Uterus (tissue), 4 donors: ENCODE measurements at regions of chr19 and their contacts with region 1.

Region 1: DNA sequence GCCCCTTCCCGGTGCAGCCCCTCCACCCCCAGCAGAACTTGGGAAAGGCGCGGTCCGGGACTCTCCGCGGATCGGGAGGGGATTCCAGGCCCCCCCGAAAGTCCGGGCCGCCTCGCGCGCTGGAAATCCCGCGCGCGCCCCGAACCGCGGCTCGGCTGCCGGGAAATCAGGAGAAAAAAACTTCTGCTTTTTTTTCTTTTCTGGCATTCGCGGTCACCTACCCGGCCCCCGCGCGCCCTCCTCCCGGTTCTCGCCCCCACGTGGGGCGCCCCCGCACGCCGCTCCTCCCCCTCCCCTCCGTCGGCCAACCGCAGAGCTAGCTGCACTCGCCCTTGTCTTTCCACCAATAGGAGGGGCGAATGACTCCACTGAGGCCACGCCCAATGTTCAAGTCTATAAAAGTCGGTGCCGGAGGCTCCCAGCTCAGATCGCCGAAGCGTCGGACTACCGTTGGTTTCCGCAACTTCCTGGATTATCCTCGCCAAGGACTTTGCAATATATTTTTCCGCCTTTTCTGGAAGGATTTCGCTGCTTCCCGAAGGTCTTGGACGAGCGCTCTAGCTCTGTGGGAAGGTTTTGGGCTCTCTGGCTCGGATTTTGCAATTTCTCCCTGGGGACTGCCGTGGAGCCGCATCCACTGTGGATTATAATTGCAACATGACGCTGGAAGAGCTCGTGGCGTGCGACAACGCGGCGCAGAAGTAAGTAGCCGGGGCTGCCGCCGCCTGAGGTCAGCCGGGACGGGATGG is at the start of gene GADD45B:
- DNase-seq: peak; percentile 98
- H3K4me3 ChIP-seq: peak within 1 kb of the TSS; percentile 64 to 70
- H3K27ac ChIP-seq: peak within 1 kb of the TSS; percentile 84 to 89
- H3K4me1 ChIP-seq: peaks cover 0 to 16% of the 10 kb centered on the region in 2 donors
- H3K27me3 ChIP-seq: no peaks in the 10 kb centered on the region
- CTCF ChIP-seq: peak in 1 of 4 experiments; percentile 50
- POLR2A ChIP-seq: peak; percentile 100
- total RNA-seq, gene GADD45B: 17.6 to 68.2 (median 38.0) TPM

Region 2: DNA sequence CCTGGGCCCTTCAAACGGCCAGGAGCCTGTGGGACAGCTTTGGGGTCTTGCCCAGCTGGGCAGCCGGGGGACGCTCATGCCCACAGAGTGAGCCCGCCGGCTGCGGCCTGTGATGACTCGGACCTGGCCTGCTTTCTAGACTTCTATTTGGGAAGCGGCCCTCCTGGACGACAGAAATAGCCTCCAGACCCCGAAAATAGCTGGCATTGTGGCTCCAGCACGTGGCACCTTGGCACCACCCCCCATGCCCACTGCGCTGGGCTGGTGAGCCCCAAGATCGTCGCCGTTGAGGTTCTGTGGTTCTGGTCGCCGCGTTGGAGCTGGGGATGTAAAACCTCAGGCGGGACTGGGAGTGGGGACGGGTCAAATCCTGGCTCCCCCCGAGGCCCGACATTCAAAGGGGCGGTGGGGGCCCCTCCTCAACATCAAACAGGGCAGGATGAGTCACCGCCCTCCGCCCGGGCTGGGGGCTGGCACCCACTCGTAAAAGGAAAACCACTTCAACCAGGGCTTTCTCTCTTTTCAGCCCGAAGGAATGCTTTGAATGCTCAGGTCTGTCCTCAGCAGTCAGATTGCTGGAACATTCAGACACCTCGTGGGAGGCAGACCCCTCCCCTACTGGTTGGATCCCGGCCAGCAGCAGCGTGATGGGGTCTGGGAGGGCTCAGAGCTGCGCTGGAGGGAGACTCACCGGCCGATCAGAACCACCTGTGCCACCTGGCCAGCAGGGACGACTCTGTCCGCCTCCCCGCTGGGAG is 42.2 kb after region 1 on chr19:
- intact Hi-C with region 1: no loop called
- DNase-seq: no peak
- H3K4me3 ChIP-seq: no peak overlapping the region
- H3K27ac ChIP-seq: no peak overlapping the region
- H3K4me1 ChIP-seq: no peaks in the 10 kb centered on the region
- H3K27me3 ChIP-seq: no peaks in the 10 kb centered on the region
- CTCF ChIP-seq: no peak
- POLR2A ChIP-seq: no peak

Region 3: GRCh38 chr19:2543463-2544442 is 67.9 kb after region 1 on chr19:
- intact Hi-C with region 1: loop called (anchors 5 kb)
- DNase-seq: peak; percentile 91 to 93
- H3K4me3 ChIP-seq: peak overlapping the region in 1 of 2 donors; percentile 0
- H3K27ac ChIP-seq: peak overlapping the region; percentile 80 to 91
- H3K4me1 ChIP-seq: peaks cover 0 to 19% of the 10 kb centered on the region in 2 donors
- H3K27me3 ChIP-seq: no peaks in the 10 kb centered on the region
- CTCF ChIP-seq: peak; percentile 26 to 42 (median 33)
- POLR2A ChIP-seq: peak; percentile 46 to 54

Region 4: GRCh38 chr19:2578901-2579677 is 103.2 kb after region 1 on chr19:
- intact Hi-C with region 1: loop called (anchors 10 kb)
- DNase-seq: peak; percentile 86 to 88
- H3K4me3 ChIP-seq: peak overlapping the region; percentile 42 to 56
- H3K27ac ChIP-seq: peak overlapping the region; percentile 61 to 78
- H3K4me1 ChIP-seq: peaks cover 0 to 18% of the 10 kb centered on the region in 2 donors
- H3K27me3 ChIP-seq: no peaks in the 10 kb centered on the region
- CTCF ChIP-seq: peak; percentile 88 to 97 (median 94)
- POLR2A ChIP-seq: peak; percentile 4 to 24

Region 5: DNA sequence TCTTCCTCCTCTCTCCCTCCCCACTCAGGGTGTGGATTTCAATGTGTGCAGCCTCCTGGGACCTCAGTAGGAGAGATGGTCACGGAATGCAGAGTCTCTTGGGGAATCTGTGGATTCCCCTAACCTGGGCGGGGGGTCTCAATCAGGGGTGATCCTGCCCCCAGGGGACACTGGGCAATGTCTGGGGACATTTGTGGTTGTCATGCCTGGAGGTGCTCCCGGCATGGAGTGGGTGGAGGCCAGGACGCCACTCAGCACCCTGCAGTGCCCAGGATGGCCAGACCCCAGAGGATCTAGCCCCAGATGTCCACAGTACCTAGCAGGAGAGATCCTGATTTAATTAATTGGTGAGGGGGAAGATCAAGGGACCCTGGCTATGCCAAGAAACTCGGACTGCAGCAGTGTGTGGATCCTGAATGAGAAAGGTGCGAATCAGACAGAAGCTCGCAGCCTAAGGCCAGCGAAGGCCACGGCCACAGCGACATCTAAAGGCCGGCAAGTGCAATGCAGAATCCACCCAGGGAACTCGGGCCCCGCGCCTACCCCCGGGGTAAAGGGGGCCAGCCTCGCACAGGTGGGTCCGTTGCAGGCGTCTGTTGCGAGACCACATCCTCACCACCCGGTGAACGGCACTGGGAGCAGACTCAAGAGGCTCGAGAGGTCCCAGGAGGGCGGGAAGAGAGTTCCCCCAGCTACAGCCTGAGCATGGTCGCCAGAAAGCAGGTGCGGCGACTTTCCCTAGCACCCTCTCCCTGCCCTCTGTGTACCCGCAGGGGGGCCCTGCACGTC is 137.8 kb after region 1 on chr19:
- intact Hi-C with region 1: loop called (anchors 2 kb)
- DNase-seq: no peak
- H3K4me3 ChIP-seq: no peak overlapping the region
- H3K27ac ChIP-seq: no peak overlapping the region
- H3K4me1 ChIP-seq: no peaks in the 10 kb centered on the region
- H3K27me3 ChIP-seq: no peaks in the 10 kb centered on the region
- CTCF ChIP-seq: peak; percentile 54 to 74 (median 62)
- POLR2A ChIP-seq: no peak